Caco-2 (cell line): ENCODE measurements at regions of chr7 and their contacts with region 1.

Region 1: DNA sequence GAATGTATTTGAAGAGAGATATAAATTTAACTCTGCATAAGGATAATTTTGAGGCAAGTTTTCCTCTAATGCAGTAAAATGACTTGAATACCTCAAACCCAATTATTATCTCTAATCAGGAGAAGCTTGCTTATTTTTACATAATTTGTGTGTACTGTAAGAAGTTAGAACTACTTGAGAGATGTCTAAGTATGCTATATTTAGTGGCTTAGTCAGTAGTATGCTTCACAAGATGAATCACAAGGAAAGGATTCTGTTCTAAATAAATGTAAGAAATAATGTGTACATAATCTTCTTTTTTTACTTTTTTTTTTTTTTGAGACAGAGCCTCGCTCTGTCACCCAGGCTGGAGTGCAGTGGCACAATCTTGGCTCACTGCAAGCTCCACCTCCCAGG is 13.7 kb downstream of the PHTF2 start:
- DNase-seq: no peak
- H3K4me3 ChIP-seq: no peak overlapping the region
- H3K4me3 Mint-ChIP-seq: peak overlapping the region; percentile 60
- H3K27ac Mint-ChIP-seq: peak overlapping the region; percentile 69
- H3K4me1 ChIP-seq: peaks cover 39% of the 10 kb centered on the region
- H3K4me1 Mint-ChIP-seq: peaks cover 23% of the 10 kb centered on the region
- H3K27me3 ChIP-seq: no peaks in the 10 kb centered on the region
- H3K27me3 Mint-ChIP-seq: no peaks in the 10 kb centered on the region
- CTCF ChIP-seq: no peak

Region 2: DNA sequence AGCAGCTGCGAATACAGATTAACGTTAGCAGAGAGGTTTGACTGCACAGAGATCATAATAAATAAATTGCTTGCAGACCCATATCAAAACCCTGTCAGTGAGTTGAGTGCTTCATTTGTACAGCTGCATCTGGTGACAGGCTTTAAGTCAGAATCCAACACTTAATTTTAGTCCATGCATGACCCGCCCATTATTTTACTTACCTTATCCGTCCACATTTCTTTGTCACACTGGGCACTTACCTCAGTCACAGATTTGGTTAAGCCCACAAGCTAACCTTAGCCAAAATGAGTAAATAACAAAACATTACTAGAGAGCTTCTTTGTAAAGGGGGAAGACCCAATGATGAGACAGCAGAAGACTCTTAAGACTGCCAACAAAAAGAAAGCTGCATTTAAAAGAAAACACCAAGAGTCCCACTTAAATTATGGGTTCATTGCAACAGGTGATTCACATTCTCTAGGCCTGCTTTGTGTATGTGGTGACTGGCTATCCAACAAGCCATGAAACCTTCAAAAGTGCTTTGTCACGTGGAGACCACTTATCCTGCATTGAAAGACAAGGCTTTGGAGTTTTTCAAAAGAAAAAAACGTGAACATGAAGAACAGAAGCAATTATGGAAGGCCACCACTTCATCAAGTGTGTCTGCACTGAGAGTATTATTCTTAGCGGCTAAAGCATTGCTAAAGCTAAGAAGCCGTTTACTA is 18.5 kb after region 1 on chr7:
- CTCF ChIA-PET with region 1: no interaction called
- POLR2A ChIA-PET with region 1: no interaction called
- intact Hi-C with region 1: loop called (anchors 1 kb)
- DNase-seq: no peak
- H3K4me3 ChIP-seq: no peak overlapping the region
- H3K4me3 Mint-ChIP-seq: no peak overlapping the region
- H3K27ac Mint-ChIP-seq: no peak overlapping the region
- H3K4me1 ChIP-seq: peaks cover 19% of the 10 kb centered on the region
- H3K4me1 Mint-ChIP-seq: peaks cover 27% of the 10 kb centered on the region
- H3K27me3 ChIP-seq: no peaks in the 10 kb centered on the region
- H3K27me3 Mint-ChIP-seq: no peaks in the 10 kb centered on the region
- CTCF ChIP-seq: no peak

Region 3: GRCh38 chr7:77866786-77867536 is 54.7 kb after region 1 on chr7:
- CTCF ChIA-PET with region 1: no interaction called
- POLR2A ChIA-PET with region 1: no interaction called
- intact Hi-C with region 1: loop called (anchors 2 kb)
- DNase-seq: peak in 1 of 2 experiments; percentile 12
- H3K4me3 ChIP-seq: no peak overlapping the region
- H3K4me3 Mint-ChIP-seq: no peak overlapping the region
- H3K27ac Mint-ChIP-seq: peak overlapping the region; percentile 72
- H3K4me1 ChIP-seq: peaks cover 32% of the 10 kb centered on the region
- H3K4me1 Mint-ChIP-seq: peaks cover 29% of the 10 kb centered on the region
- H3K27me3 ChIP-seq: no peaks in the 10 kb centered on the region
- H3K27me3 Mint-ChIP-seq: no peaks in the 10 kb centered on the region
- CTCF ChIP-seq: no peak